Activated naive CD4-positive, alpha-beta T cell treated with anti-CD3 and anti-CD28 coated beads, Interleukin-2, amount 10 ng/mL, durations not matched to agents 7 days and 5 days (primary cell): ENCODE measurements at regions of chr9 and their contacts with region 1.

Region 1: GRCh38 chr9:112361601-112362000 is 18.3 kb upstream of the HSDL2 start:
- DNase-seq: no peak
- H3K4me3 Mint-ChIP-seq: no peak overlapping the region
- H3K27ac Mint-ChIP-seq: no peak overlapping the region
- H3K4me1 Mint-ChIP-seq: peaks cover 2% of the 10 kb centered on the region
- H3K27me3 Mint-ChIP-seq: peaks cover 23% of the 10 kb centered on the region

Region 2: DNA sequence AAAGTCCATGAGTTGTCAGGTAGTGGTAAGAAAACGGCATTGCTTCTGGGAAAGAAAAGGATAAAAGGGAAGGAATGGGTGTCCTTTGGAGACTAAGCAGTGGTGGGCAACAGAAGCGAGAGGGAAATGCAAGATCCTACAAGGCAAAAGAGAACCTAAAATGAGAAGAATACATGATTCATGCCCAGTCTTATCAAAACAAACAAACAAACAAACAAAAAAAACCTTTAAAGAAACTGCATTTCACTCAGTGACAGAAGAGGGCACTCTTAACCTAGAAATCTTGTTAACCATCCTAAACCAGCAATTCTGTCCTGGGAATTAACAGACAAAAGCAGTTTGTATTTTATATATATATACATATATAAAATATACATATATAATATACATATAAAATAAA is 275.0 kb before region 1 on chr9:
- CTCF ChIA-PET with region 1: interaction called, 49 read pairs
- DNase-seq: no peak
- H3K4me3 Mint-ChIP-seq: no peak overlapping the region
- H3K27ac Mint-ChIP-seq: no peak overlapping the region
- H3K4me1 Mint-ChIP-seq: peaks cover 6% of the 10 kb centered on the region
- H3K27me3 Mint-ChIP-seq: no peaks in the 10 kb centered on the region

Region 3: DNA sequence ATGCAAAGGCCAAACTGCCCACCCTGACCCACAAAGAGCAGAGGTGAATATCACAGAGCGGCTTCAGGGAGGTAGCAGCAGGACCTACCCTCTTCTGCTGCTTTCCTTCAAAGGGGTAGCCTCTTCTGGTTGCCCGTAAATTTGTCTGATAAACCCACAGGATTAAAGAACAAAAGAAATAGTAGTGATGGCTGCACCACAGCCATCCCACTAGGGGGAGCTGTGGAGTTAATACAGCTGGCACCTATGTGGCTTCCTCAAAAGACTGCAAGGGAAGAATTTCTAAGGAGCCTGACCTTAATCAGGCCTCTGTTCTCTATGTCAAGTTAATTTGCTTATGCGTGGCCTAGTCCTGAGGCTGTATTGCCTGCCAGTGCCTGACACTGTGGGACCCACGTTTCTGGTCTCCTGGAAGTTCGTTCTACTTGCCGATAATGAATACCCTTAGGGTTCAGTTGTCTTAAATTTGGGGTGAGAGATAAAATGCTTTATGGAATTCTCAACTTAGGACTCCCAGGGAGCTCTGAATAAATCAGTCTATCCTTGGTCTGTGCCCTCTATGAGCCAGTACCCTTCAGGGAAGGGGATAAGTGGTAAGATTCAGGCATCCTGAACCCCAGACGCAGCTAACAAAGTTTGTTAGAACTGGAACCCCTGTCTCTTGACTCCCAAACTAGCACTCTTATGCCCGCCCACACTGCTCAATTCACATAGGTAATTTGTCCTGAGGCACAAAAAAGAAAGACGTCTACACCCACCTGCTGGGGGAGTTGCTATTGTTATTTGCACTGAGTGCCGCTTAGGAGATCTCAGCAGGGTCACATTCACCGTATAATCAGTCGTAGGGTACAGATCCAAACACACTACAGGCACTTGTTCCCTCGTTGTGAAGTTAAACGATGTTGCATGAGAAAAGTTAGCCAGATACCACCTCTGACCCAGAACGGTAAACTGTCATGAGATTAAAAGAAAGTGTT is 263.6 kb before region 1 on chr9:
- CTCF ChIA-PET with region 1: interaction called, 96 read pairs
- DNase-seq: peak; percentile 78
- H3K4me3 Mint-ChIP-seq: no peak overlapping the region
- H3K27ac Mint-ChIP-seq: no peak overlapping the region
- H3K4me1 Mint-ChIP-seq: peaks cover 28% of the 10 kb centered on the region
- H3K27me3 Mint-ChIP-seq: no peaks in the 10 kb centered on the region

Region 4: DNA sequence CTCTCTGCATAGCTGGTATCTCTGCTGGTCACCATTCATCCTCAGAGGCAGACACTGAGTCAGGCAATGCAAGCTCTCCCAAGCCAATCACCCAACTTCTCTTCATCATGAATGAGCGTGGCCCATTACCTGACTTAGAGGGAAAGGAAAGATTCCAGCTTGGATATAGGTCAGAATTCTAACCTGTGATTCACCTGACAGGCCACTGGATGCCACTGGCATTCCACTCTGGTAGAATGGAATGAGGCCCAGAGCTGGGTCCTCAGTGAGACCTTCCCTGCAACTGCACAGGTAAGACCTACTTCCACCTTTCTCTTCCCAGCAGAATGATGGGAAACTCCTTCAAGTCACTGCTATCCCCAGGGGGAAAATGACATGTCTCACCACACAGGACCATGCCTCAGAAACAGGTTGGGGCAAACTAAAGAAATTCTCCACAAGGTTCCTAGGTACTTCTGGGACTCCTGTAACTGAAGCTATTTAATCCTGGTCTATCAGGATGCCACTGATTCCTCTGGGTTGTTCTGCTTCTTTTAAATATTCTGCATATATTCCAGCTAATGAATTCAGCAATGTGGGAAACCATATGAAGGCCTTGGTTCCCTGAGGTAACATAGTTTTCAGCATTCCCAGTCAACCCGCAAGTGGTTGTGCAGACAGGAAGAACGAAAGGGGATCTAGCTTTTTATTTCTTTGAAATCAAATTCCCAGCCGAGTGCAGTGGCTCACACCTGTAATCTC is 248.5 kb before region 1 on chr9:
- CTCF ChIA-PET with region 1: interaction called, 33 read pairs
- DNase-seq: peak; percentile 40
- H3K4me3 Mint-ChIP-seq: no peak overlapping the region
- H3K27ac Mint-ChIP-seq: no peak overlapping the region
- H3K4me1 Mint-ChIP-seq: no peaks in the 10 kb centered on the region
- H3K27me3 Mint-ChIP-seq: no peaks in the 10 kb centered on the region